H1 (cell line): ENCODE measurements at regions of chr1 and their contacts with region 1.

Region 1: GRCh38 chr1:20376880-20377494 is 86.3 kb downstream of the VWA5B1 start:
- DNase-seq: peak; percentile 41 to 94
- H3K4me3 ChIP-seq: no peak overlapping the region
- H3K27ac ChIP-seq: no peak overlapping the region
- H3K4me1 ChIP-seq: no peaks in the 10 kb centered on the region
- H3K27me3 ChIP-seq: peaks cover 0 to 10% (median 3%) of the 10 kb centered on the region in 4 experiments; a peak in 4 of 7 replicates
- CTCF ChIP-seq: peak; percentile 84 to 93 (median 91)
- EP300 ChIP-seq: no peak
- POLR2A ChIP-seq: no peak
- RAD21 ChIP-seq: peak; percentile 65 to 76

Region 2: GRCh38 chr1:20265250-20265649 is 111.7 kb before region 1 on chr1:
- CTCF ChIA-PET with region 1: no interaction called
- POLR2A ChIA-PET with region 1: no interaction called
- DNase-seq: no peak
- H3K4me3 ChIP-seq: no peak overlapping the region
- H3K27ac ChIP-seq: no peak overlapping the region
- H3K4me1 ChIP-seq: no peaks in the 10 kb centered on the region
- H3K27me3 ChIP-seq: no peaks in the 10 kb centered on the region
- CTCF ChIP-seq: no peak
- EP300 ChIP-seq: no peak
- POLR2A ChIP-seq: no peak
- RAD21 ChIP-seq: no peak

Region 3: DNA sequence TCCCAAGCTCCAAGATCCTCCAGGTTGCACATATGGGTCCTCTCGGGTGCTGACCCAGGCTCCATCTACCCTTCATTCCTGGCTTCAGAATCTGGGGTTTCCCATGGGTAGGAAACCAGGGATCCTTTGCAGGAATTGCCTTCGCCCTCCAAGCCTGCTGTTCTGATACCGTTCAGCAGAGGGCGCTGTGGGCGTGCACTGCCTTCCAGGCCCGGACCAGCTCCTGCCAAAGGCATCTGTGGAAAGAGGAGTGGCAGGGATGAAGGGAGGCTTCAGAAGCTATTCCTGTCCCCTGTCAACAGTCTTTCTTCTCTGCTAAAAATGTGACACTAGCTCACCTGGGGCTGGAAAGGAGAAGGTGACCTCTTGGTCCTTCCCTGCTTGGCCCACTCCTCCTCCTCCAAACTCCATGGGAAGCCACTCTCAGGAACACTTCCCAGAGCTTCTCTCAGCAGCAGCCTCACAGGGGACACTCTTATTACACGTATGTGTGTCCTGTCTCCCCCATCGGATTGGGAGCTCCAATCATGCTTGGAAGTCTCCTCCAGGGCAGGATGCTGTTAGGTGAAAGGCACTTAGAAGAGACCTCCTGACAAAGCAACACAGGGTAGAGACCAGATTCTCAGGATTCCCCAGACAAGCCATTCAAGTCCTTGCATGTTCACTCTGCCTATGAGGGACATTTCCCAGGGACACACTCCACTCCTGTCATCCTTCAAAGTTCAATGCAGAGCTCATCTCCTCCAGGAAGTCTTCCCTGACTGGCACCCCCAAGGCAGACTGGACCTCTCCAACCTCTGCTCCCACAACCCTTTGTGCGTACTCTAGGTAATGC is 15.0 kb before region 1 on chr1:
- CTCF ChIA-PET with region 1: interaction called, 89 read pairs
- POLR2A ChIA-PET with region 1: interaction called, 3 read pairs
- DNase-seq: peak; percentile 54 to 99
- H3K4me3 ChIP-seq: no peak overlapping the region
- H3K27ac ChIP-seq: no peak overlapping the region
- H3K4me1 ChIP-seq: peaks cover 0 to 10% (median 4%) of the 10 kb centered on the region in 4 experiments; a peak in 4 of 7 replicates
- H3K27me3 ChIP-seq: peaks cover 13 to 48% (median 30%) of the 10 kb centered on the region in 4 experiments
- CTCF ChIP-seq: peak; percentile 96 to 98 (median 97)
- EP300 ChIP-seq: no peak
- POLR2A ChIP-seq: no peak
- RAD21 ChIP-seq: peak; percentile 90 to 91

Region 4: GRCh38 chr1:20390589-20391331 is 13.8 kb after region 1 on chr1:
- CTCF ChIA-PET with region 1: interaction called, 45 read pairs
- POLR2A ChIA-PET with region 1: no interaction called
- DNase-seq: no peak
- H3K4me3 ChIP-seq: no peak overlapping the region
- H3K27ac ChIP-seq: no peak overlapping the region
- H3K4me1 ChIP-seq: peaks cover 0 to 7% (median 3%) of the 10 kb centered on the region in 4 experiments; a peak in 3 of 7 replicates
- H3K27me3 ChIP-seq: peaks cover 0 to 5% (median 1%) of the 10 kb centered on the region in 4 experiments; a peak in 4 of 7 replicates
- CTCF ChIP-seq: no peak
- EP300 ChIP-seq: no peak
- POLR2A ChIP-seq: no peak
- RAD21 ChIP-seq: no peak

Region 5: DNA sequence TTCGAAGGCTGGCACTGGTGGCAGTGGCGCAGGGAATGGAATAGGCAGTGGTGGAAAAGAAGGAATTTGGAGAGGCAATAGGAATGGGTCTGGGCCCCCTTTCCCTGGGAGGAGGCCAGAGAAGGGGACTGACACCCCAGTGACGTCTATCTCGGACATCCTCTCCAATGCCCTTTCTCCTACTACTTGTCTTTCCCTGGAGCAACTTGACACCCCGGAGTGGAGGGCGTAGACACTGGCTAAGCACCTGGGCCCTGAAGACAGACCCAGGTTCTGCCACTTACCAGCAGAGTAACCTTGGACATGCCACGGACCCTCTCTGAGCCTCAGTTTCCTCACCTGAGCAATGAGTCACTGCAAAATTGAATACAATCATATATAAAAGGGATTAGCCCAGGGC is 22.2 kb after region 1 on chr1:
- CTCF ChIA-PET with region 1: interaction called, 20 read pairs
- POLR2A ChIA-PET with region 1: no interaction called
- DNase-seq: no peak
- H3K4me3 ChIP-seq: no peak overlapping the region
- H3K27ac ChIP-seq: no peak overlapping the region
- H3K4me1 ChIP-seq: peaks cover 0 to 2% (median 0%) of the 10 kb centered on the region in 4 experiments; a peak in 1 of 7 replicates
- H3K27me3 ChIP-seq: peaks cover 30 to 64% (median 49%) of the 10 kb centered on the region in 4 experiments
- CTCF ChIP-seq: no peak
- EP300 ChIP-seq: no peak
- POLR2A ChIP-seq: no peak
- RAD21 ChIP-seq: no peak

Region 6: DNA sequence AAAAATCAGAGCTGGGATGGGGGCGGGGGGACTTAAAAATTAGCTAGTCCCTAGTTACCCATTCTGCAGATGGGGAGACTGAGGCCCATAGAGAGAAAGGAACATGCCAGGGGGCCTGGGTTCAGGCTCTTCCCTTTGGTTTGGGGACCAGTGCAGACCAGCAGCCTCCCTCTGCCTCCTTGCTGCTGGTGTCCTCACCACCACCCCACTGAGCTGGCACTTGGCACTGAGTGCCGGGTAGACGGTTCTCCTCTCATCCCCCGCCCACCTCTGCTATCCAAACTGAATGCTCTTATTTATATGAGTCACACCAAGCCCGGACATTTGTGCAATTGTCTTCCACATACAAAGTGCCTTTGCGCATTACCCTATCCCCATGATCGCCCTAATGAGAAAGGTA is 69.8 kb after region 1 on chr1:
- CTCF ChIA-PET with region 1: interaction called, 14 read pairs
- POLR2A ChIA-PET with region 1: no interaction called
- DNase-seq: no peak
- H3K4me3 ChIP-seq: no peak overlapping the region
- H3K27ac ChIP-seq: no peak overlapping the region
- H3K4me1 ChIP-seq: peaks cover 2 to 15% (median 5%) of the 10 kb centered on the region in 4 experiments; a peak in 5 of 7 replicates
- H3K27me3 ChIP-seq: no peaks in the 10 kb centered on the region; a peak in 2 of 7 replicates
- CTCF ChIP-seq: no peak
- EP300 ChIP-seq: no peak
- POLR2A ChIP-seq: no peak
- RAD21 ChIP-seq: no peak

Region 7: DNA sequence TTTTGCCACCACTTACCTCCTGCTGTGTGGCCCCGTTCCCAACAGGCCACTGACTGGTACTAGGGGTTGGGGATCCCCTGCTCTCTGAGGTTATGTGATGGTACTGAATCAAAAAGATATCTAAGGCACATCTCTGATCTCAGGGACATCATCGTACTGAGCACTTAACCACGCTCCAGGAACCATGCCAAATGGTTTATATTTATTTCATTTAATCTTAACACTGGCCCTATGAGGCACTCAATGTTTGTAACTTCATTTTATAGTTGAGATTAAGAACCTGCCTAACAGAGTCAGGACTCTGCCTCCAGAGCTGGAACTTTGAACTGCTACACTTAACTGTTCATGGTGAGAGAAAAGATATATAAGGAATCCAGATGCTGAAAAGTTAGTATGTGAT is 508.1 kb after region 1 on chr1:
- CTCF ChIA-PET with region 1: no interaction called
- POLR2A ChIA-PET with region 1: no interaction called
- DNase-seq: no peak
- H3K4me3 ChIP-seq: no peak overlapping the region
- H3K27ac ChIP-seq: no peak overlapping the region
- H3K4me1 ChIP-seq: no peaks in the 10 kb centered on the region
- H3K27me3 ChIP-seq: no peaks in the 10 kb centered on the region
- CTCF ChIP-seq: no peak
- EP300 ChIP-seq: no peak
- POLR2A ChIP-seq: no peak
- RAD21 ChIP-seq: no peak